ENCODE measurements at regions of chr3 and their contacts with region 1.

Region 1: GRCh38 chr3:65334045-65334665 is 646.4 kb upstream of the ADAMTS9 start:
- DNase-seq: no peak
- ATAC-seq: peak in 1 of 4 donors; percentile 25
- H3K4me3 ChIP-seq: no peak overlapping the region
- H3K27ac ChIP-seq: no peak overlapping the region
- H3K4me1 ChIP-seq: no peaks in the 10 kb centered on the region
- H3K27me3 ChIP-seq: no peaks in the 10 kb centered on the region
- CTCF ChIP-seq: peak; percentile 5

Region 2: GRCh38 chr3:65138556-65138955 is 195.6 kb before region 1 on chr3:
- intact Hi-C with region 1: no loop called
- DNase-seq: no peak
- ATAC-seq: no peak
- H3K4me3 ChIP-seq: no peak overlapping the region
- H3K27ac ChIP-seq: no peak overlapping the region
- H3K4me1 ChIP-seq: no peaks in the 10 kb centered on the region
- H3K27me3 ChIP-seq: no peaks in the 10 kb centered on the region
- CTCF ChIP-seq: no peak

Region 3: GRCh38 chr3:65412588-65412987 is 78.4 kb after region 1 on chr3:
- intact Hi-C with region 1: loop called in 1 of 2 experiments (anchors 5 kb)
- DNase-seq: peak; percentile 25 to 69
- ATAC-seq: peak; percentile 87 to 99 (median 94)
- H3K4me3 ChIP-seq: no peak overlapping the region
- H3K27ac ChIP-seq: no peak overlapping the region
- H3K4me1 ChIP-seq: peaks cover 12% of the 10 kb centered on the region
- H3K27me3 ChIP-seq: no peaks in the 10 kb centered on the region
- CTCF ChIP-seq: peak; percentile 41